Activated CD4-positive, alpha-beta memory T cell treated with anti-CD3 and anti-CD28 coated beads, Interleukin-2, amount 10 ng/mL, durations not matched to agents 7 days and 5 days (primary cell): ENCODE measurements at regions of chr1 and their contacts with region 1.

Region 1: GRCh38 chr1:206734499-206735142 is 36.0 kb upstream of the IL19 start:
- DNase-seq: peak; percentile 82
- H3K4me3 Mint-ChIP-seq: no peak overlapping the region
- H3K27ac Mint-ChIP-seq: peak overlapping the region; percentile 34
- H3K4me1 Mint-ChIP-seq: peaks cover 71% of the 10 kb centered on the region
- H3K27me3 Mint-ChIP-seq: no peaks in the 10 kb centered on the region

Region 2: DNA sequence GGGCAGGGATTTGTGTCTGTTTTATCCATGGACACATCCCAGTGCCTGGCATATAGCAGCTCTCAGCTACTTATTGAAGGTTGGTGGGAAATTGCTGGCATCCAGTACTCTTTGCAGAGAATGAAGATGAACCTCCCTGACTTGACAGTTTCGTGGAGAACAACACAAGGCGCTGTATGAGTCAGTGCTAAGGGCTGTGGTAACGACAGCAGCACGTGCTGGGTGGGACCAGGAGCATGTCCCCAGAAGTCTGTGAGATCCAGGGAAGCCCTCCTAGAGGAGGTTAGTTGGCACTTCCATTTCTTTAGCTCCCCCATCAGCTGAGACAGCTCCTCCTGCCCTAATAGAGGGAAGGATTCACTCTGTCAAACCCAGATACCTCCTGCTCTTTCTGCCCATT is 10.1 kb after region 1 on chr1:
- CTCF ChIA-PET with region 1: interaction called, 13 read pairs
- POLR2A ChIA-PET with region 1: interaction called, 6 read pairs
- DNase-seq: peak; percentile 55
- H3K4me3 Mint-ChIP-seq: no peak overlapping the region
- H3K27ac Mint-ChIP-seq: no peak overlapping the region
- H3K4me1 Mint-ChIP-seq: peaks cover 71% of the 10 kb centered on the region
- H3K27me3 Mint-ChIP-seq: peaks cover 12% of the 10 kb centered on the region

Region 3: GRCh38 chr1:206766251-206766856 is 31.7 kb after region 1 on chr1:
- CTCF ChIA-PET with region 1: interaction called, 41 read pairs
- POLR2A ChIA-PET with region 1: interaction called, 14 read pairs
- DNase-seq: peak; percentile 85
- H3K4me3 Mint-ChIP-seq: peak overlapping the region; percentile 21
- H3K27ac Mint-ChIP-seq: peak overlapping the region; percentile 66
- H3K4me1 Mint-ChIP-seq: peaks cover 75% of the 10 kb centered on the region
- H3K27me3 Mint-ChIP-seq: peaks cover 19% of the 10 kb centered on the region

Region 4: GRCh38 chr1:206797534-206798383 is 63.1 kb after region 1 on chr1:
- CTCF ChIA-PET with region 1: interaction called, 276 read pairs
- POLR2A ChIA-PET with region 1: interaction called, 30 read pairs
- DNase-seq: peak; percentile 45
- H3K4me3 Mint-ChIP-seq: no peak overlapping the region
- H3K27ac Mint-ChIP-seq: no peak overlapping the region
- H3K4me1 Mint-ChIP-seq: peaks cover 64% of the 10 kb centered on the region
- H3K27me3 Mint-ChIP-seq: peaks cover 38% of the 10 kb centered on the region

Region 5: GRCh38 chr1:206808615-206809014 is 74.0 kb after region 1 on chr1:
- CTCF ChIA-PET with region 1: interaction called, 276 read pairs
- POLR2A ChIA-PET with region 1: interaction called, 30 read pairs
- DNase-seq: peak; percentile 62
- H3K4me3 Mint-ChIP-seq: no peak overlapping the region
- H3K27ac Mint-ChIP-seq: no peak overlapping the region
- H3K4me1 Mint-ChIP-seq: peaks cover 53% of the 10 kb centered on the region
- H3K27me3 Mint-ChIP-seq: no peaks in the 10 kb centered on the region

Region 6: GRCh38 chr1:206925106-206925736 is 190.6 kb after region 1 on chr1:
- CTCF ChIA-PET with region 1: interaction called, 15 read pairs
- POLR2A ChIA-PET with region 1: interaction called, 7 read pairs
- DNase-seq: peak; percentile 71
- H3K4me3 Mint-ChIP-seq: no peak overlapping the region
- H3K27ac Mint-ChIP-seq: no peak overlapping the region
- H3K4me1 Mint-ChIP-seq: peaks cover 22% of the 10 kb centered on the region
- H3K27me3 Mint-ChIP-seq: no peaks in the 10 kb centered on the region

Region 7: DNA sequence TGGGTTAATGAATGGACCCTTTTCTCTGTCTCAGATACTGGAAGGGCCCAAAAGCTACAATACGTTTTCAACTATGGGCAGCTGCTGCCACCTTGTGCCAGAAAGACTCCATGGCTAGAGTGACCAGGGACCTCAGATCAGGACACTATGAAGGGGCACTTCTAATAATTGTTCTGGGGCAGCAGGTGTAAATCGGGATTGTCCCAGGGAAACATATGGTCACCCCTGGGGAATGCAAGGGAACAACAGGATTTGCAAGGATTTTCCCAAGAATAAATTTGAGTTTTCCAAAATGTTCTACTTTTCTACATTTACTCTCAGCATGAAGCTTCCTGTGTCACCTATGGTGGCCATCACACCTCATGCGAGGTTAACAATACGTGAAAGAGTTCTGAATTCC is 247.6 kb after region 1 on chr1:
- CTCF ChIA-PET with region 1: interaction called, 19 read pairs
- POLR2A ChIA-PET with region 1: no interaction called
- DNase-seq: peak; percentile 70
- H3K4me3 Mint-ChIP-seq: no peak overlapping the region
- H3K27ac Mint-ChIP-seq: no peak overlapping the region
- H3K4me1 Mint-ChIP-seq: no peaks in the 10 kb centered on the region
- H3K27me3 Mint-ChIP-seq: peaks cover 47% of the 10 kb centered on the region